CD8-positive, alpha-beta T cell (primary cell): ENCODE measurements at regions of chr20 and their contacts with region 1.

Region 1: GRCh38 chr20:51398083-51398482 is 144.4 kb downstream of the NFATC2 start:
- DNase-seq: no peak
- ATAC-seq: no peak
- H3K4me3 ChIP-seq: no peak overlapping the region
- H3K4me3 Mint-ChIP-seq: no peak overlapping the region
- H3K27ac ChIP-seq: no peak overlapping the region
- H3K27ac Mint-ChIP-seq: peak overlapping the region; percentile 18
- H3K4me1 ChIP-seq: peaks cover 39% of the 10 kb centered on the region
- H3K4me1 Mint-ChIP-seq: peaks cover 48% of the 10 kb centered on the region
- H3K27me3 ChIP-seq: no peaks in the 10 kb centered on the region
- H3K27me3 Mint-ChIP-seq: no peaks in the 10 kb centered on the region
- CTCF ChIP-seq: no peak

Region 2: DNA sequence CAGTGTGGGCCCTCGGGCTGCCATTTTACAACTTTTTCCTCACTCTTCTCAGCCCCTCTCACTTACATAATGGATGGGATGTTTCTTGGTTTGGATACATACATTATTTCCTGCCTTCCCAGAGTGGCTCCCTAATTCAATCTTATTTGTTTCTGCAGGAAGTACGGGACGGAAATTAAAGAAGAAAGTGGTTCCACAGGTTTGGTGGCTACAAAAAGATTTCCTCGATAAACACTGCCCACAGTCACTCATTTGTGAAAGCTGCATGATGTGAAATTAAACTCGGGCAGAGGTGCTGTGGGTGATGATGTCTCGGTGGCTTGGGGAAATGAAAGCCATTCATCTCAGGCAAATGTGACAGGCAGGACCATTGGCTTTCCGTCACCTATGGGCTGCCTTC is 255.7 kb before region 1 on chr20:
- CTCF ChIA-PET with region 1: no interaction called
- POLR2A ChIA-PET with region 1: no interaction called
- intact Hi-C with region 1: no loop called
- DNase-seq: no peak
- ATAC-seq: no peak
- H3K4me3 ChIP-seq: no peak overlapping the region
- H3K4me3 Mint-ChIP-seq: no peak overlapping the region
- H3K27ac ChIP-seq: no peak overlapping the region
- H3K27ac Mint-ChIP-seq: no peak overlapping the region
- H3K4me1 ChIP-seq: no peaks in the 10 kb centered on the region
- H3K4me1 Mint-ChIP-seq: no peaks in the 10 kb centered on the region
- H3K27me3 ChIP-seq: peaks cover 0 to 4% of the 10 kb centered on the region in 2 experiments
- H3K27me3 Mint-ChIP-seq: peaks cover 53% of the 10 kb centered on the region
- CTCF ChIP-seq: no peak

Region 3: GRCh38 chr20:51335329-51335841 is 62.7 kb before region 1 on chr20:
- CTCF ChIA-PET with region 1: no interaction called
- POLR2A ChIA-PET with region 1: no interaction called
- intact Hi-C with region 1: no loop called
- DNase-seq: no peak
- ATAC-seq: no peak
- H3K4me3 ChIP-seq: no peak overlapping the region
- H3K4me3 Mint-ChIP-seq: no peak overlapping the region
- H3K27ac ChIP-seq: no peak overlapping the region
- H3K27ac Mint-ChIP-seq: no peak overlapping the region
- H3K4me1 ChIP-seq: no peaks in the 10 kb centered on the region
- H3K4me1 Mint-ChIP-seq: no peaks in the 10 kb centered on the region
- H3K27me3 ChIP-seq: no peaks in the 10 kb centered on the region
- H3K27me3 Mint-ChIP-seq: no peaks in the 10 kb centered on the region
- CTCF ChIP-seq: no peak

Region 4: DNA sequence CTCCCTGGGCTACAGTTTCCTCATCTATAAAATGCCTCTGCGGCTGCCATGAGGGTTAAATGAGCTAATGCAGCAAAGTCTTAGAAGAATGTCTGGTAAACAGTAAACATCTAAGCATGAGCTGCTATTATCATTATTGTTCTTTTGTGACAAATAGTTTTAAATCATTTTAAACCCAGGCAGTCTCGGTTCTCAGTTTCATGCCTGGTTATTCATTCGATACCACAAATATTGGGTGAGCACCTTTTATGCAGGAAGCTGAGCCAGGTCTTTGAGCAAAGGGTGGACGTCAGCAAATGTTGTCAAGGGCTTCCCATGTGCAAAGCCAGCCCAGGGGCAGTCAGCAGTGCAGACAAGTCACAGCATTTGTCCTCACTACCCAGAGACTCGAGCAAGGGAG is 15.8 kb after region 1 on chr20:
- CTCF ChIA-PET with region 1: interaction called, 9 read pairs
- POLR2A ChIA-PET with region 1: interaction called, 3 read pairs
- intact Hi-C with region 1: loop called in 1 of 2 experiments (anchors 1 kb)
- DNase-seq: peak in 3 of 9 experiments; percentile 54 to 76 (median 54)
- ATAC-seq: peak; percentile 47
- H3K4me3 ChIP-seq: no peak overlapping the region
- H3K4me3 Mint-ChIP-seq: no peak overlapping the region
- H3K27ac ChIP-seq: peak overlapping the region in 1 of 2 experiments; percentile 75
- H3K27ac Mint-ChIP-seq: peak overlapping the region; percentile 87
- H3K4me1 ChIP-seq: peaks cover 31% of the 10 kb centered on the region
- H3K4me1 Mint-ChIP-seq: peaks cover 64% of the 10 kb centered on the region
- H3K27me3 ChIP-seq: no peaks in the 10 kb centered on the region
- H3K27me3 Mint-ChIP-seq: no peaks in the 10 kb centered on the region
- CTCF ChIP-seq: no peak

Region 5: GRCh38 chr20:51738947-51739456 is 340.9 kb after region 1 on chr20:
- CTCF ChIA-PET with region 1: no interaction called
- POLR2A ChIA-PET with region 1: no interaction called
- intact Hi-C with region 1: no loop called
- DNase-seq: no peak
- ATAC-seq: no peak
- H3K4me3 ChIP-seq: no peak overlapping the region
- H3K4me3 Mint-ChIP-seq: no peak overlapping the region
- H3K27ac ChIP-seq: no peak overlapping the region
- H3K27ac Mint-ChIP-seq: no peak overlapping the region
- H3K4me1 ChIP-seq: no peaks in the 10 kb centered on the region
- H3K4me1 Mint-ChIP-seq: no peaks in the 10 kb centered on the region
- H3K27me3 ChIP-seq: no peaks in the 10 kb centered on the region
- H3K27me3 Mint-ChIP-seq: peaks cover 2% of the 10 kb centered on the region
- CTCF ChIP-seq: no peak